ENCODE measurements at regions of chr10 and their contacts with region 1.

Region 1: DNA sequence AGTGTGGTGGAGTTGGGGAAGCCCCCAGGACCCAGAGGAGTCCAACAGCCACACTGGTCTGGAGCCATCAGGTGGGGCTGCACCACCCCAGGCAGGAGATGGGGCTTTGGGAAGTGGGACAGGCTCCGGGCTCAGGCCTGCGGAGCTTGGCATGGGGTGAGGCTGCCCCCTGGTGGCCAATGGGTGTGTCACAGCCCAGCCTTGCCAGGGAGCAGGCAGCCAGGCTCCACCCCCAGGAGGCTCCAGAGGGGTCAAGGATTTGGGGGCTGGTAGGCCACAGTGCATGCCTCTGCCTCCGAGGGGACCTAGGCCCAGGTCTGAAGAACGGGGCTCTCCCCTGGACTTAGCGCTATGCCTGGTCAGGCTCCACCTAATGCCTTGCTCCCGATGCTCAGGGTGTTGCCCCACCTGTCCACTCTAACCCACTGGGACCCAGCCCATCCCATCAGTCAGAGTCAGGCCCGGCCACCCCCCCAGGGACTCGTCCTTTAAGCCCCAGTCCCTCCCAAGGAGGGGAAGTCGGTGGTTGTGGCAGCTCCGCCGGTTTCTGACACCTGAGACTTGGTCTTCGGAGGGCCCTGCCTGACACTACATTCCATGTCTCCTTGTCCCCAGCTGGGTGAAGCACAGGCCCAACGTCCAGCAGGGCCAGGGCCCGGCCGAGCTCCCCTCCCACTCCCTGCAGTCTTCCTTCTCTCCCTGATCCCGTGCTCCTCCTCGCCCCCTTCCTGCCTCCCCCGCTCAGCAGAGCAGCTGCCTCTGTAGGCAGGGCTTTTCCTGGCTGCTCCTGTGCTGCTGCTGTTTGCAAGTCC is 11.3 kb upstream of the SAMD8 start:
- DNase-seq: peak; percentile 68 to 83 (median 75)
- H3K4me3 ChIP-seq: no peak overlapping the region
- H3K4me3 Mint-ChIP-seq: no peak overlapping the region
- H3K27ac ChIP-seq: no peak overlapping the region
- H3K27ac Mint-ChIP-seq: no peak overlapping the region
- H3K4me1 ChIP-seq: no peaks in the 10 kb centered on the region
- H3K4me1 Mint-ChIP-seq: peaks cover 0 to 4% (median 2%) of the 10 kb centered on the region in 3 donors
- H3K27me3 ChIP-seq: no peaks in the 10 kb centered on the region
- H3K27me3 Mint-ChIP-seq: peaks cover 0 to 5% of the 10 kb centered on the region in 2 donors

Region 2: DNA sequence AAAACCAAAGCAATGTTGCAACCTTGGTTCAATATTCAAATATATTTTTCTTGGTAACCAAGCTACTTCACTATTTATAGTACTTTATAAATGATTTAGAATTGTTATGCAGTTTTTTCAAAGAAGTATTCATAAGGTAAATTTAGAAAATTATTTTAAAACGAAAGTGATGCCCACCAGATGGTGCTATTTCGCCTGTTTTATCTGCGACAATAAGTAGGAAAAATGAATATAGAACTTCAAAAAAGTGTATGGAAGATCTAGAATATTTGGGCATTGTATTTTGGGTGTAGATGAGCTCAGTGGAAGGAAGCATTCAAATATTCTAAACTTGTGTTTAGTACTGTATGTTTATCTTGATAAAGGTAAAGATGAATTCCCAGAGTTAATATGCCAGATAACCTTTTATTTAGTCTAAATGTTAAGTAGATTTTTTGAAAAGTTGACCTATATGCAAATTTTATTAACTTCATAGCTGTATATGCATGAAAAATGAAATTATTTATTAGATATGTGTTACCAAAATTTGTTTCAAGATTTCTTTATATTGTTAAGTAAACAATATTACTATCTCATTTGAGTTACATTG is 856.0 kb before region 1 on chr10:
- CTCF ChIA-PET with region 1: interaction called, 15 read pairs
- POLR2A ChIA-PET with region 1: no interaction called
- DNase-seq: peak in 2 of 5 donors; percentile 11 to 28
- H3K4me3 ChIP-seq: no peak overlapping the region
- H3K4me3 Mint-ChIP-seq: no peak overlapping the region
- H3K27ac ChIP-seq: no peak overlapping the region
- H3K27ac Mint-ChIP-seq: no peak overlapping the region
- H3K4me1 ChIP-seq: no peaks in the 10 kb centered on the region
- H3K4me1 Mint-ChIP-seq: peaks cover 0 to 4% (median 4%) of the 10 kb centered on the region in 3 donors
- H3K27me3 ChIP-seq: no peaks in the 10 kb centered on the region
- H3K27me3 Mint-ChIP-seq: no peaks in the 10 kb centered on the region

Region 3: DNA sequence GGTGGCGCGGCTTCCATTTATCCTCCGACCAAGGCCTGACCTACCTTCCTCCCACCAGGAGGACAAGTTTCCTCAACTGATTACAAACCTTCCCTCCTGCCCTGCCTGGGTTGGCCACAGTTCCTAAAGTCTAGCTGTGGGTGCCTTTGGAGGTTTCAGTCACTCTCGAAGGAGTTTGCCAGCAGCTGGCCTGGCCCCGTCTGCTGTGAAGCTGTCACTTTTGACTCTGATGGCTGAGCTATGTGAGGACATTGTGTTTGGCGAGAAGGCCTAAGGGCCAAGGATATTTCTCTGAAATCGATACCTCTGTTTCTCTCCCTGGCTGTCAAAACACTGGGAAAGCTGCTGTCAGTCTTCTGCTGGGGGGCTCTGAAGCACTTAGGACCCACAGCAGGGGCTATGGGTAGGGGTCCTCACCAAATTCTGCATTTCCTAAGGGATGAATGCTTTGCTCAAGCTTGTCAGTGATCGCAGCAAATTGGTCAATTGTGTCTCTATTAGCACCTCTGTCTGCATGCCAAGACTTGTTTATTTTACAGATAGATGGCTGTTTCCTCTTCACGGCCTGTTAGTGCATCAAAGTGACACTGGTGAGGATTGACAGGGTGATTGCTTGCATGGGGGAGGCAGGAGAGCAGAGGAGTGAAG is 20.6 kb before region 1 on chr10:
- CTCF ChIA-PET with region 1: no interaction called
- POLR2A ChIA-PET with region 1: no interaction called
- DNase-seq: no peak
- H3K4me3 ChIP-seq: no peak overlapping the region
- H3K4me3 Mint-ChIP-seq: no peak overlapping the region
- H3K27ac ChIP-seq: no peak overlapping the region
- H3K27ac Mint-ChIP-seq: no peak overlapping the region
- H3K4me1 ChIP-seq: no peaks in the 10 kb centered on the region
- H3K4me1 Mint-ChIP-seq: peaks cover 9 to 15% (median 10%) of the 10 kb centered on the region in 3 donors
- H3K27me3 ChIP-seq: no peaks in the 10 kb centered on the region
- H3K27me3 Mint-ChIP-seq: no peaks in the 10 kb centered on the region

Measured in CD8-positive, alpha-beta memory T cell (primary cell).